ENCODE measurements at regions of chr6 and their contacts with region 1.

Region 1: GRCh38 chr6:3281631-3282475 is 23.1 kb downstream of the PSMG4 start:
- DNase-seq: peak; percentile 57
- ATAC-seq: peak; percentile 30

Region 2: GRCh38 chr6:3456755-3457466 is 175.1 kb after region 1 on chr6 and contains the start of gene SLC22A23:
- intact Hi-C with region 1: loop called (anchors 10 kb)
- DNase-seq: peak; percentile 75
- ATAC-seq: peak; percentile 55
- total RNA-seq, gene SLC22A23: 10.3 TPM

Region 3: DNA sequence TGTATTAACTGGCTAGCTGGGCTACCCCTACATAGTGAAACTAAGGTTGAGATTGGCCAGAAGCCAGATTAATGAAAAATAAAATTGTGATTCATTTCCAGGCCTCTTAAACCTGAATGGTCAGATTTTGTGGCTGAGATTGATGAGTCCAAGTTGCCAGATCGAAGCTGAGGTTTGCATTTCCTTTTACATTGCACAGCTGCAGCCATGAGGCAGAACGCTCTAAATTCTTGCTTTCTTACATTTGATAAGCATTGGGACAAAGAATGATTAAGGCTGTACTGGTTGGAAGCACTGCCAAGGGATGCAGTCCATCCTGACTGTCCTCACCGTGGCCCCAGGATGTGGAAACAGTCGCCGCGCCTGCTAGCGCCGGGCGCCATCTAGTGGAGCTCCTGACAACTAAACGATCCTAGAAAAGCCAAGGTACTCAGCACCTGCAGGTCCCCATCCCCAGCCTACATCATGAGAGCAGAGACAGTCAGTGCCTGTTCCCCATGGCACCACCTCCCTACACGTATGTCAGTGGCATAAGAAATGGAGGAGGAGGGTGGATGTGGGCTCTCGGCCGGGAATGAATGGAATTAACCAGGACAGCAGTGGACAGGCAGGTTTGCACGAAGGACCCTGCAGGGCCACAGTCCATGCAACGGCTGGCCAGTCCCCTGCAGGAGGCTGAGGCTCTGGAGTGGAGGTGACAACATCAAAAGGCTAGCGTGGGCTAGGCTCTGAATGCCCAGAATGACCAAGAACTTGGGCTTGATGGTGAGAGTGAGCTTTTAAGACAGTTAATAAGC is 450.7 kb after region 1 on chr6:
- intact Hi-C with region 1: loop called (anchors 2 kb)
- DNase-seq: peak; percentile 83
- ATAC-seq: peak; percentile 85

Measured in sciatic nerve (tissue), 2 donors.